Activated CD4-positive, alpha-beta memory T cell treated with anti-CD3 and anti-CD28 coated beads, Interleukin-2, amount 10 ng/mL, durations not matched to agents 7 days and 5 days (primary cell): ENCODE measurements at regions of chr3 and their contacts with region 1.

Region 1: DNA sequence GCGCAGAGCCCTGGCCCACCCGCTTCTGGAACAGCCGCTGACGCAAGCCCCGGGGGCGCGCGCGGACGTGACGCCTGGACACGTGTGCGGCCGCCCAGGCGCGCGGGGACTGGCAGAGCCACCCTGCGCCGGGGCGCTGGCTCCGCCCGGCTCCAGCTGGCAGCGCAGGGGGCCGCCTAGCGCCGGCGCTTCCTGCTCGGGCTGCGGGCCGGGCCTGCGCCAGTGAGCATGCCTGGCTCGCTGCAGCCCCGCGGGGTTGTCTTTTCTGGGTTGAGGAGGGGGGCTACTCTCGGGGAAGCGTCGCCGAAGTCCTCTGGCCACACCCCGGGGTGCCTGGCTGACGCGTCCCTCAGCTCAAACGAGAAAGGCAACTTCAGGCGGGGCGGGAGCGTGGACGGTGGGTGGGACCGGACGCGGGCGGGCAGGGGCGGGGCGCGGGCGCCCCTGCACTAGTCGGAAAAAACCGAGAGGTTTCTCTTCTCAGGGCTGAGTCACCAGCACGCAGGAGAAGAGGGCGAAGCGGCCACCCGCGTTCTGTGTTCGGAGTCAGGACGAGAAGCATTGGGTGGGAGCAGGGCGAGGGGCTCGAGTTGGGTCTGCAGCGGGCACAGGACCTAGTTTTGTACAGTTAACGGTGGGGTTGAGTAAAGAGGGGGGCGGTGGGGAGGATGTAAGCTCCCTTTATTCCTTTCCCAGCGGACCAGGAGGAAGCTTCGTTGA is at the start of gene SIAH2:
- DNase-seq: peak; percentile 93
- H3K4me3 Mint-ChIP-seq: peak within 1 kb of the TSS; percentile 97
- H3K27ac Mint-ChIP-seq: peak within 1 kb of the TSS; percentile 100
- H3K4me1 Mint-ChIP-seq: peaks cover 45% of the 10 kb centered on the region
- H3K27me3 Mint-ChIP-seq: no peaks in the 10 kb centered on the region
- total RNA-seq, gene SIAH2: 42.5 to 44.9 TPM

Region 2: DNA sequence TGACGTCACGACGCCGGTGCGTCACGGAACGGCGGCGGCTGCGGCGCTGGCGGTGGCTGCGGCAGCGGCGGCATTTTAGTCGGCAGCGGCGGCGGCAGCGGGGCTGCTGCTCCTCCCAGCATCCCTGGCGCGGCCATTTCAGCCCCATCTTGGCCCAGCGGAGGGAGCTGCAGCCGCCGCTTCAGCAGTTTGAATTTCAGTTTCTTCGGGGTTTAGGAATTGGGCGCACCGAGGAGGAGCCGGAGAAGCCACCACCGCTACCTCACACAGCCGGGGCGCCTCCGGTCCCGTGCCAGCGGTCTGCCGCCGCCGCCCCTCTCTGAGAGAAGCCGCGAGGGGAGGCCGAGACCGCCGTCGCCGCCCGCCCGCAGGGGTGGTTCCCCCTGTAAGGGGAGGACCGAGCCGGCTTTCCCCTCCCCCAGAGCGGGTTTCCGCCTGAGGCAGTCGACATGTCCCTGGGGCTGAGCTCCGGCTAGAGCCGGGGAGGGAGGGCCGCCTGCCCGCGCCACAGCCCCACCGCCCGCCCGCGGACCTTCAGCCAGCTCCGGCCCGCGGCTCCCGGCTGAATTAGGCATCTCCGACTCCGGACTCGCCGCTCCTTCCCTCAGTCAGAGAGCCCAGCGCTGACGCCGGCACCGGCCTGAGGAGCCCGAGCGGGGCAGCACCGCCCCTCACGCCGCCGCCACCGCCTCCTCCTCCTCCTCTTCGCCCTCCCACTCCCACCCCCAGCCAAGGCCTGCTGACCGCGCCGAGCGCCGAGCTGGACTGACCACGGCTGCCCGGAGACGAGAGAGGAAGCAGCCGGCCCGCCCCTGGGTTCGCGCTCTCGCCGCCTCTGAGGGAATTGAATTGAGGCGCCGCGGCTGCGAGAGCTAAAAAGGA is 354.8 kb before region 1 on chr3 and contains the start of gene TSC22D2:
- CTCF ChIA-PET with region 1: interaction called, 4 read pairs
- POLR2A ChIA-PET with region 1: interaction called, 109 read pairs
- DNase-seq: peak; percentile 93
- H3K4me3 Mint-ChIP-seq: peak within 1 kb of the TSS; percentile 80
- H3K27ac Mint-ChIP-seq: peak within 1 kb of the TSS; percentile 91
- H3K4me1 Mint-ChIP-seq: peaks cover 33% of the 10 kb centered on the region
- H3K27me3 Mint-ChIP-seq: peaks cover 4% of the 10 kb centered on the region
- total RNA-seq, gene TSC22D2: 13.9 to 15.0 TPM

Region 3: DNA sequence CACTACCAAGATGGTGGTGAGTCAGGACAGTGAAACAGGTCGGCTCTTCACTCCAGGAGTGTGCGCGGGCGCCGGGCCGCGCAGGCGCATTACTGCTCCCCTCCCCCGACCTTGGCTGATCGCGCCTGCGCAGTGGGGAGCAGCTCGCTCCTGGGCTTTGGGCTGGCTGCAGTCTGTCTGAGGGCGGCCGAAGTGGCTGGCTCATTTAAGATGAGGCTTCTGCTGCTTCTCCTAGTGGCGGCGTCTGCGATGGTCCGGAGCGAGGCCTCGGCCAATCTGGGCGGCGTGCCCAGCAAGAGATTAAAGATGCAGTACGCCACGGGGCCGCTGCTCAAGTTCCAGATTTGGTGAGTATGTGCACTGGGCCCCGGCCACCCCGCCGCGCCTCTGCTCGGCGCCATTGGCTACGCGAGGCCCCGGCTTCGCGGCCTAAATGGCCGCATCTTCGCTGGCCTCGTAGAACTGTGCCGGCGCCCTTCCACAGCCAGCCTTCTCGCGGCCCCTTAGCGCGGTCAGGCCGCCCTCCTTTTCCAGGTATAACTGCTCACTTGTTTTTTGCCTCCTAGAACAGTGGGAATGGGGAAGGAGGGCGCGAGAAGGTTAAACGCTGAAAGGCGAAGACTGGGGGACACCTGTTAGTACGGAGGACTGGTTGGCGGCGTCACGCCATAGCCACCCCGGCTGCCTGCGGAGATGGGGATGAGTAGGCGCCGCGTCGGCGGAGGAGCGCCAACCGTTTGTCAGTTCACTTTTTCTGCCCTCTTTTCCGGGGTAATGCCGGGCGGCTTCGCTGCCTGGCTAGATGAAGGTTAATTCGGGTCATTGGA is 159.9 kb before region 1 on chr3 and contains the start of gene SELENOT:
- CTCF ChIA-PET with region 1: interaction called, 5 read pairs
- POLR2A ChIA-PET with region 1: interaction called, 99 read pairs
- DNase-seq: peak; percentile 95
- H3K4me3 Mint-ChIP-seq: peak within 1 kb of the TSS; percentile 98
- H3K27ac Mint-ChIP-seq: peak within 1 kb of the TSS; percentile 98
- H3K4me1 Mint-ChIP-seq: peaks cover 64% of the 10 kb centered on the region
- H3K27me3 Mint-ChIP-seq: no peaks in the 10 kb centered on the region
- total RNA-seq, gene SELENOT: 124 to 130 TPM

Region 4: GRCh38 chr3:150727653-150728502 is 35.4 kb before region 1 on chr3:
- CTCF ChIA-PET with region 1: interaction called, 28 read pairs
- POLR2A ChIA-PET with region 1: interaction called, 21 read pairs
- DNase-seq: no peak
- H3K4me3 Mint-ChIP-seq: no peak overlapping the region
- H3K27ac Mint-ChIP-seq: no peak overlapping the region
- H3K4me1 Mint-ChIP-seq: peaks cover 17% of the 10 kb centered on the region
- H3K27me3 Mint-ChIP-seq: no peaks in the 10 kb centered on the region

Region 5: GRCh38 chr3:150751753-150752263 is 11.5 kb before region 1 on chr3:
- CTCF ChIA-PET with region 1: interaction called, 4 read pairs
- POLR2A ChIA-PET with region 1: interaction called, 50 read pairs
- DNase-seq: no peak
- H3K4me3 Mint-ChIP-seq: no peak overlapping the region
- H3K27ac Mint-ChIP-seq: peak overlapping the region; percentile 30
- H3K4me1 Mint-ChIP-seq: peaks cover 78% of the 10 kb centered on the region
- H3K27me3 Mint-ChIP-seq: no peaks in the 10 kb centered on the region

Region 6: GRCh38 chr3:151086484-151087456 is 323.5 kb after region 1 on chr3:
- CTCF ChIA-PET with region 1: no interaction called
- POLR2A ChIA-PET with region 1: interaction called, 10 read pairs
- DNase-seq: peak; percentile 77
- H3K4me3 Mint-ChIP-seq: peak overlapping the region; percentile 77
- H3K27ac Mint-ChIP-seq: no peak overlapping the region
- H3K4me1 Mint-ChIP-seq: peaks cover 10% of the 10 kb centered on the region
- H3K27me3 Mint-ChIP-seq: peaks cover 48% of the 10 kb centered on the region

Region 7: DNA sequence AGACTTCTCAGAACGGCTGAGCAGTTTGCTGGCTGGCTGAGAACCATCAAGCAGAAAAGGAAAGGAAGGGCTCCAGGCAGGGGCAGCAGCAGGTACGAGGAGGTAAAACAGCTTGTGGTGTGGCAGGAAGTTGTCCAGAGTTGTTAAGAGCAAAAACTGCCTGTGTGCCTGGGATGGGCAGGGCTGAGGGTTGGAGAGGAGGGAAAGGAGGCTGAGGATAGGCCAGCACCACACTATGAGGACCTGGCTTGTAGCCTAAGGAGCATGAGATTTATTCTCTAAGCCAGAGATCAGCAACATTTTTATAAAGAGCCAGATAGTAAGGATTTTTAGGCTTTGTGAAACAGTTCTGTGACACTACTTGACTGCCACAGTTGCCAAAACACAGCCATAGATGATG is 689.6 kb after region 1 on chr3:
- CTCF ChIA-PET with region 1: no interaction called
- POLR2A ChIA-PET with region 1: no interaction called
- DNase-seq: no peak
- H3K4me3 Mint-ChIP-seq: no peak overlapping the region
- H3K27ac Mint-ChIP-seq: no peak overlapping the region
- H3K4me1 Mint-ChIP-seq: no peaks in the 10 kb centered on the region
- H3K27me3 Mint-ChIP-seq: peaks cover 14% of the 10 kb centered on the region